Lower leg skin (tissue), 4 donors: ENCODE measurements at regions of chr4 and their contacts with region 1.

Region 1: GRCh38 chr4:80215449-80216052 is 18.2 kb downstream of the PRDM8 start:
- DNase-seq: no peak
- H3K4me3 ChIP-seq: no peak overlapping the region
- CTCF ChIP-seq: peak in 1 of 3 donors; percentile 33
- POLR2A ChIP-seq: no peak

Region 2: GRCh38 chr4:78951862-78952472 is 1263.6 kb before region 1 on chr4:
- intact Hi-C with region 1: loop called (anchors 5 kb)
- DNase-seq: no peak
- H3K4me3 ChIP-seq: no peak overlapping the region
- CTCF ChIP-seq: peak in 1 of 3 donors; percentile 44
- POLR2A ChIP-seq: no peak

Region 3: GRCh38 chr4:79042079-79042674 is 1173.4 kb before region 1 on chr4:
- intact Hi-C with region 1: loop called (anchors 10 kb)
- DNase-seq: no peak
- H3K4me3 ChIP-seq: no peak overlapping the region
- CTCF ChIP-seq: no peak
- POLR2A ChIP-seq: no peak